ENCODE measurements at regions of chr5 and their contacts with region 1.

Region 1: GRCh38 chr5:6745706-6746222 is 32.5 kb downstream of the TENT4A start:
- DNase-seq: peak in 4 of 5 donors; percentile 54 to 60 (median 59)
- H3K4me3 ChIP-seq: no peak overlapping the region
- H3K4me3 Mint-ChIP-seq: no peak overlapping the region
- H3K27ac ChIP-seq: no peak overlapping the region
- H3K27ac Mint-ChIP-seq: peak overlapping the region in 2 of 7 donors; percentile 48 to 62
- H3K4me1 ChIP-seq: no peaks in the 10 kb centered on the region
- H3K4me1 Mint-ChIP-seq: peaks cover 3 to 15% (median 5%) of the 10 kb centered on the region in 4 donors
- H3K27me3 ChIP-seq: no peaks in the 10 kb centered on the region
- H3K27me3 Mint-ChIP-seq: no peaks in the 10 kb centered on the region

Region 2: GRCh38 chr5:5141625-5142532 is 1603.9 kb before region 1 on chr5:
- CTCF ChIA-PET with region 1: no interaction called
- POLR2A ChIA-PET with region 1: no interaction called
- intact Hi-C with region 1: loop called (anchors 5 kb)
- DNase-seq: peak in 4 of 5 donors; percentile 34 to 47 (median 39)
- H3K4me3 ChIP-seq: no peak overlapping the region
- H3K4me3 Mint-ChIP-seq: no peak overlapping the region
- H3K27ac ChIP-seq: no peak overlapping the region
- H3K27ac Mint-ChIP-seq: peak overlapping the region in 1 of 7 donors; percentile 56
- H3K4me1 ChIP-seq: peaks cover 11% of the 10 kb centered on the region
- H3K4me1 Mint-ChIP-seq: peaks cover 0 to 14% (median 6%) of the 10 kb centered on the region in 4 donors
- H3K27me3 ChIP-seq: no peaks in the 10 kb centered on the region
- H3K27me3 Mint-ChIP-seq: peaks cover 21 to 26% of the 10 kb centered on the region in 2 donors

Region 3: DNA sequence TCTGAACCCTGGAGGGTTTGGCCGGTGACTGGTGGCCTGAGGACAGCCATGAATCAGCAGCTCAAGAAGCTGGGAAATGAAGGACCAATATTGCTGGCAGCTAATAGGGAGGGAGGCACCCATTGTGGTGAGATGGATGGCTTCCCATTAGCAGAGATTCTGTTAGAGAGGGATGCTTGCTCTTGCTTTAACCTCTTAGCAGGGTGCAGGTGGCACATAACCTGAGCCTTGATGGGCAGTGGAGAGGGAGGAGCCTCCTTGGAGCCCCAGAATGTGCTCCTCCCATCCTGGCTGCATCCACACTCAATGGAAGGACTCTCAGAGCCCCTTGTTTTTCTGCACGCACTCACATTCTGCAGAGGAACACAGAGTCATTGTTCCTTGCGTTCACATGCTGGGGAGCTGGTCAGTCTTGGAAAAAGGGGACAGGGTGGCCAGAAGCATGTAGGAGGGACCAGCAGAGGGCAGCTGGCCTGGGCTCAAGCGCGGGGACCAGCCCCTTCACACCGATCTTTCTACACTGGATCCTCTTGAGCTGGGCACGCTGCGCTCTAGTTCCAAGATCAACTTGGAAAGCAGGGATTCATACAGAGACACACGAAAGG is 529.2 kb before region 1 on chr5:
- CTCF ChIA-PET with region 1: no interaction called
- POLR2A ChIA-PET with region 1: no interaction called
- intact Hi-C with region 1: no loop called
- DNase-seq: no peak
- H3K4me3 ChIP-seq: no peak overlapping the region
- H3K4me3 Mint-ChIP-seq: no peak overlapping the region
- H3K27ac ChIP-seq: no peak overlapping the region
- H3K27ac Mint-ChIP-seq: no peak overlapping the region
- H3K4me1 ChIP-seq: no peaks in the 10 kb centered on the region
- H3K4me1 Mint-ChIP-seq: no peaks in the 10 kb centered on the region
- H3K27me3 ChIP-seq: no peaks in the 10 kb centered on the region
- H3K27me3 Mint-ChIP-seq: peaks cover 2 to 5% of the 10 kb centered on the region in 2 donors

Region 4: DNA sequence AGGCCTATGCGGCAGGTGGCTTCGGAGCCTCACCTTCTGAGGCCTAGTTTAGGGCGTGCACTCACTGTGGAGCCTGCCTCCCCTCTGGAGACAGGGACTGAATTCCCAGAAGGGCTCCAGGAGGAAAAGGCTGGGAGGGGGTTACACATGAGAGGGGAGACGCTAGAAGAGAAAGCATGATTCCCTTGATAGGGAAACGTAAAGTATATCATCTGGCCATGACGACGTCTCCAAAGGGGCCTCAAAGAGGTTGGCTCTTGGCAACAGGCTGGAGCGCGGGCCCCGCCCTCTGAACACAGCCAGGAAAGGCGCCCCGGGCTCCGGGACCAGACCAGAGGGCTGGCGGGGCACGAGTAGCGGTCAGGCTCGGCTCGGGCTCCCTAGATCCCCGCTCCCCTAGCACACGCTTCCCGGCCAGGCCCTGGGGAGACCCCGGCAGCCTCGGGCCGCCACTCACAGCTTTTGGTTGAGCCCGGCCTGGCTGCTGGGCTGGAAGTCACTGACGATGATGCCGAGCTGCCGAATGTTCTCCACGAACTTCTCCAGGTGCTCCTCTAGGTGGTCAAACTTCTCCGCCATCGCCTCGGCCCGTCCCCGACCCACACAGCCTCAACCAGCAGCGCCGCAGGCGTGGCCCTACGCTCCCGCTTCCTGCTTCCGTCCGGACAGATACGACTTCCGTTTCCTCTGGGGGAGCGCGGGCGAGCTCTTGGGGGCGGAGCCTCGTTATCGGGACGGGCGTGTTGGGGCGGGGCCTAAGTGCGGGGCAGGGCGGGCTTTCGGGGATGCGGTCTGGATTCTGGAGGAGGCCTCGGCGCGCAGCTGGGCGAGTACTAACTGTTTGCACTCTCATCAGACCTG is 367.6 kb before region 1 on chr5 and contains the start of gene MED10:
- CTCF ChIA-PET with region 1: no interaction called
- POLR2A ChIA-PET with region 1: interaction called, 5 read pairs
- intact Hi-C with region 1: loop called (anchors 10 kb)
- DNase-seq: peak; percentile 91 to 95 (median 92)
- H3K4me3 ChIP-seq: peak within 1 kb of the TSS; percentile 89 to 90
- H3K4me3 Mint-ChIP-seq: peak within 1 kb of the TSS; percentile 96 to 100 (median 99)
- H3K27ac ChIP-seq: peak within 1 kb of the TSS; percentile 86
- H3K27ac Mint-ChIP-seq: peak within 1 kb of the TSS; percentile 95 to 100 (median 98)
- H3K4me1 ChIP-seq: peaks cover 34% of the 10 kb centered on the region
- H3K4me1 Mint-ChIP-seq: peaks cover 35 to 62% (median 49%) of the 10 kb centered on the region in 4 donors
- H3K27me3 ChIP-seq: no peaks in the 10 kb centered on the region
- H3K27me3 Mint-ChIP-seq: no peaks in the 10 kb centered on the region
- total RNA-seq, gene MED10: 61.2 to 64.7 TPM

Region 5: DNA sequence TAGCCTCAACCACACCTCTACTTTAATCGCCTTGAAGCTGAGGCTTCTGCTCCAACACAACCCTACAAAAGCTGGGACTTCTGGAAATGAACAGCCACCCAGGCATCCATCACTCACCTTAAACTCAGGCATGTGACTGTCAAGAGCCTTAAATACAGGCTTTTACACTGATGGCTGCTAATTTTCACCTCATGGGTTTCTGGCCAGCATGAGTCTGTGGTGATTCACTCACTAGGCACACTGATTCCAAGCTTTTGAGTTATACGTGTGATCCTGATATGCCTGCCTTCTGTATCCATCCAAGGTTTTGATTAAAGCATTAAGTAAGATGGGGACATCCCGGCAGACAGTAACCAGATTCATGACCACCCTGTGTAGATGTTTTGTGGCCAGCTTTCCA is 121.8 kb before region 1 on chr5:
- CTCF ChIA-PET with region 1: interaction called, 11 read pairs
- POLR2A ChIA-PET with region 1: no interaction called
- intact Hi-C with region 1: loop called (anchors 5 kb)
- DNase-seq: no peak
- H3K4me3 ChIP-seq: no peak overlapping the region
- H3K4me3 Mint-ChIP-seq: peak overlapping the region in 1 of 8 donors; percentile 13
- H3K27ac ChIP-seq: no peak overlapping the region
- H3K27ac Mint-ChIP-seq: peak overlapping the region in 1 of 7 donors; percentile 48
- H3K4me1 ChIP-seq: peaks cover 5% of the 10 kb centered on the region
- H3K4me1 Mint-ChIP-seq: peaks cover 19 to 39% (median 31%) of the 10 kb centered on the region in 4 donors
- H3K27me3 ChIP-seq: no peaks in the 10 kb centered on the region
- H3K27me3 Mint-ChIP-seq: no peaks in the 10 kb centered on the region

Region 6: GRCh38 chr5:6712577-6713275 is 33.0 kb before region 1 on chr5:
- CTCF ChIA-PET with region 1: interaction called, 15 read pairs
- POLR2A ChIA-PET with region 1: interaction called, 11 read pairs
- intact Hi-C with region 1: loop called (anchors 1 kb)
- DNase-seq: peak; percentile 96 to 99 (median 99)
- H3K4me3 ChIP-seq: peak overlapping the region; percentile 70 to 81
- H3K4me3 Mint-ChIP-seq: peak overlapping the region; percentile 88 to 91 (median 90)
- H3K27ac ChIP-seq: peak overlapping the region; percentile 86
- H3K27ac Mint-ChIP-seq: peak overlapping the region; percentile 92 to 95 (median 94)
- H3K4me1 ChIP-seq: peaks cover 31% of the 10 kb centered on the region
- H3K4me1 Mint-ChIP-seq: peaks cover 26 to 39% (median 33%) of the 10 kb centered on the region in 4 donors
- H3K27me3 ChIP-seq: no peaks in the 10 kb centered on the region
- H3K27me3 Mint-ChIP-seq: no peaks in the 10 kb centered on the region

Region 7: GRCh38 chr5:6728011-6728794 is 17.6 kb before region 1 on chr5:
- CTCF ChIA-PET with region 1: interaction called, 38 read pairs
- POLR2A ChIA-PET with region 1: no interaction called
- intact Hi-C with region 1: no loop called
- DNase-seq: no peak
- H3K4me3 ChIP-seq: no peak overlapping the region
- H3K4me3 Mint-ChIP-seq: peak overlapping the region in 4 of 8 donors; percentile 6 to 73 (median 45)
- H3K27ac ChIP-seq: no peak overlapping the region
- H3K27ac Mint-ChIP-seq: peak overlapping the region in 6 of 7 donors; percentile 63 to 87 (median 68)
- H3K4me1 ChIP-seq: peaks cover 66% of the 10 kb centered on the region
- H3K4me1 Mint-ChIP-seq: peaks cover 66 to 97% (median 85%) of the 10 kb centered on the region in 4 donors
- H3K27me3 ChIP-seq: no peaks in the 10 kb centered on the region
- H3K27me3 Mint-ChIP-seq: no peaks in the 10 kb centered on the region

Region 8: GRCh38 chr5:6772886-6773285 is 27.1 kb after region 1 on chr5:
- CTCF ChIA-PET with region 1: no interaction called
- POLR2A ChIA-PET with region 1: no interaction called
- intact Hi-C with region 1: no loop called
- DNase-seq: no peak
- H3K4me3 ChIP-seq: no peak overlapping the region
- H3K4me3 Mint-ChIP-seq: peak overlapping the region in 1 of 8 donors; percentile 28
- H3K27ac ChIP-seq: no peak overlapping the region
- H3K27ac Mint-ChIP-seq: no peak overlapping the region
- H3K4me1 ChIP-seq: no peaks in the 10 kb centered on the region
- H3K4me1 Mint-ChIP-seq: peaks cover 5 to 12% (median 9%) of the 10 kb centered on the region in 4 donors
- H3K27me3 ChIP-seq: peaks cover 3% of the 10 kb centered on the region
- H3K27me3 Mint-ChIP-seq: peaks cover 2 to 17% of the 10 kb centered on the region in 2 donors

Region 9: GRCh38 chr5:6950860-6951259 is 205.1 kb after region 1 on chr5:
- CTCF ChIA-PET with region 1: no interaction called
- POLR2A ChIA-PET with region 1: no interaction called
- intact Hi-C with region 1: no loop called
- DNase-seq: no peak
- H3K4me3 ChIP-seq: no peak overlapping the region
- H3K4me3 Mint-ChIP-seq: no peak overlapping the region
- H3K27ac ChIP-seq: no peak overlapping the region
- H3K27ac Mint-ChIP-seq: no peak overlapping the region
- H3K4me1 ChIP-seq: no peaks in the 10 kb centered on the region
- H3K4me1 Mint-ChIP-seq: no peaks in the 10 kb centered on the region
- H3K27me3 ChIP-seq: no peaks in the 10 kb centered on the region
- H3K27me3 Mint-ChIP-seq: peaks cover 10 to 17% of the 10 kb centered on the region in 2 donors

Measured in CD4-positive, alpha-beta memory T cell (primary cell).